Endothelial cell of umbilical vein (primary cell): ENCODE measurements at regions of chr7 and their contacts with region 1.

Region 1: GRCh38 chr7:137656227-137656849 is 190.4 kb downstream of the DGKI start:
- DNase-seq: peak; percentile 89
- H3K4me3 ChIP-seq: no peak overlapping the region
- H3K27ac ChIP-seq: no peak overlapping the region
- H3K4me1 ChIP-seq: peaks cover 9% of the 10 kb centered on the region
- H3K27me3 ChIP-seq: no peaks in the 10 kb centered on the region
- CTCF ChIP-seq: peak; percentile 77
- POLR2A ChIP-seq: no peak

Region 2: GRCh38 chr7:136807598-136807997 is 848.7 kb before region 1 on chr7:
- CTCF ChIA-PET with region 1: no interaction called
- POLR2A ChIA-PET with region 1: no interaction called
- dilution Hi-C with region 1: no loop called
- intact Hi-C with region 1: no loop called
- DNase-seq: no peak
- H3K4me3 ChIP-seq: no peak overlapping the region
- H3K27ac ChIP-seq: no peak overlapping the region
- H3K4me1 ChIP-seq: no peaks in the 10 kb centered on the region
- H3K27me3 ChIP-seq: no peaks in the 10 kb centered on the region
- CTCF ChIP-seq: no peak
- POLR2A ChIP-seq: no peak

Region 3: DNA sequence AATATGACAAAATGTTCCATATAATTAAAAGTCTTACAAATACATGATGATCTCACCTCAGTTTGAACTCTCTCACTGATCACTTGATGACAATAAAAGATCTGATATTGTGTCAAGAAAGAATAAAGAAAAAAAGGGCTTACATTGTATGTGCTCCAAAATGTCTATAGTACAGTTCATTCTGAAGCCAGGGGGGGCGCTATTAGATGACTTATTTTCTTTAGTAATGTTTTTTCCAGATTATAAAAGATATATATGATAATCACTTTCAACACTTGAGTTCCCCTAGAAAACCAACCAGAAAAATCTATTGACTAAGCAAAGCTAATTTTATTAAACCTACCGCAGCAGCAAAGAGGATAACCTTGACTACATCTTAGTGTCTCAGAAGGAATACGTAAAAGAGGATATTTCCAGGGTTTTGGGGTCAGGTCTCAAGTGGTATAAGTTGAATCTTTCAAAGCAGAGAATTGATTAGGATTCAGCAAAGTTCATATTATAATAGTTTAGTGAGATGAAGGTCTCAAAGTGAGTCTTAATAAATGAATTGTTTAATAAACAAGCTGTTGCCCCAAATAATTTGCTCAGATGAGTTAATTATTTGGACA is 368.6 kb before region 1 on chr7:
- CTCF ChIA-PET with region 1: no interaction called
- POLR2A ChIA-PET with region 1: no interaction called
- dilution Hi-C with region 1: no loop called
- intact Hi-C with region 1: no loop called
- DNase-seq: peak; percentile 1
- H3K4me3 ChIP-seq: no peak overlapping the region
- H3K27ac ChIP-seq: no peak overlapping the region
- H3K4me1 ChIP-seq: no peaks in the 10 kb centered on the region
- H3K27me3 ChIP-seq: no peaks in the 10 kb centered on the region
- CTCF ChIP-seq: no peak
- POLR2A ChIP-seq: no peak

Region 4: GRCh38 chr7:137606061-137606674 is 50.2 kb before region 1 on chr7:
- CTCF ChIA-PET with region 1: interaction called, 12 read pairs
- POLR2A ChIA-PET with region 1: no interaction called
- dilution Hi-C with region 1: no loop called
- intact Hi-C with region 1: loop called (anchors 5 kb)
- DNase-seq: peak; percentile 62
- H3K4me3 ChIP-seq: no peak overlapping the region
- H3K27ac ChIP-seq: no peak overlapping the region
- H3K4me1 ChIP-seq: no peaks in the 10 kb centered on the region
- H3K27me3 ChIP-seq: peaks cover 15 to 24% of the 10 kb centered on the region in 2 experiments
- CTCF ChIP-seq: peak in 1 of 2 donors; percentile 19
- POLR2A ChIP-seq: no peak

Region 5: DNA sequence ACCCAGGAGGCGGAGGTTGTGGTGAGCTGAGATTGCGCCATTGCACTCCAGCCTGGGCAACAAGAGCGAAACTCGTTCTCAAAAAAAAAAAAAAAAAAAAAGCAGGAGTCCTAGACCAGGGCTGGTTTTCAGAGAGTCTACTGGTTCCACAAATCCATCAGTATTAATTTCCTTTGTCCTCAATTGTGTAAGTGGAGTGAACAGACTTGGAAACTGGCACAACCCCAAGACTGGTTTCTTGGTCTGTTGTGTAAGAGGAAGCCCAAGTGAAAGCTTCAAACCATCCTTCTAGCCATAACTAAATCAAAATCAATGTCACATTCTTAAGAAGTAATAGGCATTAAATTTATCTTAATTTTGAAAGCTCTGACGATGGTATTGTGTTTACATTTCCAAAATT is 23.2 kb before region 1 on chr7:
- CTCF ChIA-PET with region 1: interaction called, 20 read pairs
- POLR2A ChIA-PET with region 1: no interaction called
- dilution Hi-C with region 1: no loop called
- intact Hi-C with region 1: no loop called
- DNase-seq: no peak
- H3K4me3 ChIP-seq: no peak overlapping the region
- H3K27ac ChIP-seq: no peak overlapping the region
- H3K4me1 ChIP-seq: no peaks in the 10 kb centered on the region
- H3K27me3 ChIP-seq: peaks cover 0 to 5% of the 10 kb centered on the region in 2 experiments
- CTCF ChIP-seq: no peak
- POLR2A ChIP-seq: no peak

Region 6: DNA sequence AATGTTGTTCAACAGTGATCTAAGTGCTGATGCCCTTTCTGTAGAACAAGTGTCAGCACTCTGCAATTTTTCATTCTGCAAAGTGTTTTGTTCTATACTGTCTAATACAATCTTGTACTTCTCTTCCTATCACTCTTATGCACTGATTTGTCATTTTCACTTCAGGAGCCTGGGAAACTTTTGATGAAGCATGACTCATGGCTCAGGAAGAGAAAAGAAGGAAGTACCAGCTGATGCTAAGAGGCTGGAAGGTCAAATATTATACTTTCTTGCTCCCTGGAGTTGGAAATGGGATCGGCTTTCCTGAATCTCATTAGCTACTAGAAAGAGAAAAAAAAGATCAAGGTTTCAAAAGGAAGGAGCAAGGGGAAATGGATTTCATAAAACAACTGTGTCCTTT is 144.7 kb after region 1 on chr7:
- CTCF ChIA-PET with region 1: interaction called, 8 read pairs
- POLR2A ChIA-PET with region 1: no interaction called
- dilution Hi-C with region 1: no loop called
- intact Hi-C with region 1: loop called (anchors 2 kb)
- DNase-seq: peak; percentile 88
- H3K4me3 ChIP-seq: no peak overlapping the region
- H3K27ac ChIP-seq: peak overlapping the region; percentile 4
- H3K4me1 ChIP-seq: peaks cover 9% of the 10 kb centered on the region
- H3K27me3 ChIP-seq: no peaks in the 10 kb centered on the region
- CTCF ChIP-seq: no peak
- POLR2A ChIP-seq: no peak

Region 7: DNA sequence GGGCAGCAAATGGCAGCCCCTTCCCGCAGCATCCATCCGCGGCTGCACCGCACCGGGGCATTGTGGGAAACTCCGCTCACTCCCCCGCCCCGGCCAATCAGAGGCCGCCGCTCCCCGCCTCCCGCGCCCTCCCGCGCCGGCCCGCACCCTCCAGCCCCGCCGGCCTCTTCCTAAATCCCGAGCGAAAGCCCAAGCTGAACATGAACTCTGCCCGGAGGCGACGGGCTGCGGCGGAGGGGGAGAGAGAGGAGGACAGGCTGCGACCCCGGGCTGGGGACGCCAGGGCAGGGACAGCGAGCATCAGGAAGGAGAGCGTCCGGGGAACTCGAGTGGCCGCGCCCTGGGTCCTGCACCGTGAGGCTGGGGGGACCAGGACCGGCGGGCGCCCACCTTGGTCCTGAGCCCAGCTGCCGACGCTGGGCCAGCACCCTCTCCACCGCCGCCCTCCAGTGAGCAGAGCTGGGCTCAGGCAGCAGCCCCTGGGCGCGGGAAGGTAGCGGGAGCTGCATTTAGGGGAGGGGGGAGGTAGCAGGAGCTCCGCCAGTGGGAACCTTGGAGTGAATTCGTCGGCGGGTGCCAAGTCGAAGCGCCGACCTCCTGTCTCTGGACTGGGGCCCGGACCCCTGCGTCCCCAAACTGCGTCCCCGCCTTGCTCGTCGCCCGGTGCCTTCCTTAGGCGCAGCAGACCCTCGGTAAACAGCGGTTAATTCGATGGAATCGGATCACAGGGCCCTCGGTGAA is 190.7 kb after region 1 on chr7 and contains the start of gene DGKI:
- CTCF ChIA-PET with region 1: interaction called, 4 read pairs
- POLR2A ChIA-PET with region 1: no interaction called
- dilution Hi-C with region 1: no loop called
- intact Hi-C with region 1: loop called (anchors 1 kb)
- DNase-seq: no peak
- H3K4me3 ChIP-seq: no peak within 1 kb of the TSS
- H3K27ac ChIP-seq: no peak within 1 kb of the TSS
- H3K4me1 ChIP-seq: peaks cover 2% of the 10 kb centered on the region
- H3K27me3 ChIP-seq: peaks cover 34% of the 10 kb centered on the region in 2 experiments
- CTCF ChIP-seq: no peak
- POLR2A ChIP-seq: no peak
- total RNA-seq, gene DGKI: 0.14 and 0.51 TPM in 2 replicates

Region 8: DNA sequence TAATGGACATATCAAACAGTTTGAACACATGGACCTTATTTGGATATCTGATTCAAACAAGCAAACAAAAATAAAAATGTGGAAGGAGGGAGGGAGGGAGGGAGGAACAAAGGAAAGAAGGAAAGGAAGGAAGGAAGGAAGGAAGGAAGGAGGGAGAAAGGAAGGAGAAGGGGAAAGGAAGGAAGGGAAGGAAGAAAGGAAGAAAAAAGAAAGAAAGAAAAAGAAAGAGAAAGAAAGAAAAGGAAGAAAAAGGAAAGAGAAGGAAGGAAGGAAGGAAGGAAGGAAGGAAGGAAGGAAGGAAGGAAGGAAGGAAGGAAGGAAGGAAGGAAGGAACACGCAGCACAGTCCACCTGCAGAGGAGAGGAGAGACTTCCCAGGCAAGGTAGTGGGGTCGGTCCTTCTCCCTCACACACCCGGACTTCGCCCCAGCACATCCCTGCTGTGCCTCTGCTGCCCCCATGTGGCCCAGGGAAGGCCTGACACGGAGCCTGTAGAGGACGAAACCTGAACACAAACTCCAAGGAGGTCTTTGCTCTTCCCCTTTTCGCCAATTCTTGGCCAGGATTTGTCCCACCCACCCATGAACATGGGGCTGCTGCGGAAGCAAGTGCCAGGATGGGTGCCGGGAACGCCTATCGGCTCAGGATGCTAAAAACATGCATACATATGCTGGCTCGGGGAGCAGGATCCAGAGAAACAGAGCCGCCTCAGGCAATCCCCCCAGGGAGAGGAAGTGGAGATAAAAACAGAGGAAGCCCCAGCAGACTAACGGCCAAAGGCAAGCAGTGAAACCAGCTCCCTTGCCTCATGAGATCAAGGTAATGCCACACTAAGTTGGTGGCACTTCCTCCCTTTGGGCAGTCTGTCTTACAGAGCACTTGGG is 242.7 kb after region 1 on chr7:
- CTCF ChIA-PET with region 1: interaction called, 52 read pairs
- POLR2A ChIA-PET with region 1: no interaction called
- dilution Hi-C with region 1: no loop called
- intact Hi-C with region 1: loop called (anchors 1 kb)
- DNase-seq: peak; percentile 73
- H3K4me3 ChIP-seq: no peak overlapping the region
- H3K27ac ChIP-seq: no peak overlapping the region
- H3K4me1 ChIP-seq: peaks cover 2% of the 10 kb centered on the region
- H3K27me3 ChIP-seq: no peaks in the 10 kb centered on the region
- CTCF ChIP-seq: peak; percentile 91 to 98
- POLR2A ChIP-seq: no peak

Region 9: GRCh38 chr7:138017992-138018391 is 361.7 kb after region 1 on chr7:
- CTCF ChIA-PET with region 1: interaction called, 11 read pairs
- POLR2A ChIA-PET with region 1: interaction called, 3 read pairs
- dilution Hi-C with region 1: no loop called
- intact Hi-C with region 1: no loop called
- DNase-seq: no peak
- H3K4me3 ChIP-seq: no peak overlapping the region
- H3K27ac ChIP-seq: no peak overlapping the region
- H3K4me1 ChIP-seq: no peaks in the 10 kb centered on the region
- H3K27me3 ChIP-seq: no peaks in the 10 kb centered on the region
- CTCF ChIP-seq: no peak
- POLR2A ChIP-seq: no peak